CD4-positive, alpha-beta T cell (primary cell): ENCODE measurements at regions of chr18 and their contacts with region 1.

Region 1: GRCh38 chr18:6781786-6782185 is 52.3 kb downstream of the ARHGAP28 start:
- DNase-seq: no peak
- ATAC-seq: no peak
- H3K4me3 ChIP-seq: no peak overlapping the region
- H3K4me3 Mint-ChIP-seq: no peak overlapping the region
- H3K27ac ChIP-seq: no peak overlapping the region
- H3K27ac Mint-ChIP-seq: no peak overlapping the region
- H3K4me1 ChIP-seq: no peaks in the 10 kb centered on the region
- H3K4me1 Mint-ChIP-seq: no peaks in the 10 kb centered on the region
- H3K27me3 ChIP-seq: no peaks in the 10 kb centered on the region
- H3K27me3 Mint-ChIP-seq: no peaks in the 10 kb centered on the region
- CTCF ChIP-seq: no peak

Region 2: GRCh38 chr18:6741232-6741663 is 40.5 kb before region 1 on chr18:
- CTCF ChIA-PET with region 1: no interaction called
- POLR2A ChIA-PET with region 1: no interaction called
- intact Hi-C with region 1: no loop called
- DNase-seq: no peak
- ATAC-seq: no peak
- H3K4me3 ChIP-seq: no peak overlapping the region
- H3K4me3 Mint-ChIP-seq: no peak overlapping the region
- H3K27ac ChIP-seq: no peak overlapping the region
- H3K27ac Mint-ChIP-seq: no peak overlapping the region
- H3K4me1 ChIP-seq: no peaks in the 10 kb centered on the region
- H3K4me1 Mint-ChIP-seq: no peaks in the 10 kb centered on the region
- H3K27me3 ChIP-seq: no peaks in the 10 kb centered on the region
- H3K27me3 Mint-ChIP-seq: no peaks in the 10 kb centered on the region
- CTCF ChIP-seq: no peak

Region 3: DNA sequence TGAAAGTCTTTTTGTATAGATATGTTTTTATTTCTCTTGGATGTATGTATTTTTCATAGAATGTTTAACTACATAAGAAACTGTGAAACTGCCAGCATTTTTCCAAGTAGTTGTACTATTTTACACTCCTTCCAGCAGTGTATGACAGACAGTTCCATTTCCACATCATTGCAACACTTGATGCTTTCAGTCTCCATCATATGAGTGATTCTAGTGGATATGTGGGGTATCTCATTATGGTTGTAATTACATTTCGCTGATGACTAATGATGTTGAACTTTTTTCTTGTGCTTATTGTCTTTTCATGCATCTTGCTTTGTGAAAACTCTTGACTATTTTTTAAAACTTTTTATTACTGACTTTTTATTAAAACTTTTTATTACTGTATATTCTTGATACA is 49.1 kb after region 1 on chr18:
- CTCF ChIA-PET with region 1: no interaction called
- POLR2A ChIA-PET with region 1: no interaction called
- intact Hi-C with region 1: no loop called
- DNase-seq: no peak
- ATAC-seq: no peak
- H3K4me3 ChIP-seq: no peak overlapping the region
- H3K4me3 Mint-ChIP-seq: no peak overlapping the region
- H3K27ac ChIP-seq: no peak overlapping the region
- H3K27ac Mint-ChIP-seq: no peak overlapping the region
- H3K4me1 ChIP-seq: no peaks in the 10 kb centered on the region
- H3K4me1 Mint-ChIP-seq: no peaks in the 10 kb centered on the region
- H3K27me3 ChIP-seq: no peaks in the 10 kb centered on the region
- H3K27me3 Mint-ChIP-seq: no peaks in the 10 kb centered on the region
- CTCF ChIP-seq: no peak

Region 4: DNA sequence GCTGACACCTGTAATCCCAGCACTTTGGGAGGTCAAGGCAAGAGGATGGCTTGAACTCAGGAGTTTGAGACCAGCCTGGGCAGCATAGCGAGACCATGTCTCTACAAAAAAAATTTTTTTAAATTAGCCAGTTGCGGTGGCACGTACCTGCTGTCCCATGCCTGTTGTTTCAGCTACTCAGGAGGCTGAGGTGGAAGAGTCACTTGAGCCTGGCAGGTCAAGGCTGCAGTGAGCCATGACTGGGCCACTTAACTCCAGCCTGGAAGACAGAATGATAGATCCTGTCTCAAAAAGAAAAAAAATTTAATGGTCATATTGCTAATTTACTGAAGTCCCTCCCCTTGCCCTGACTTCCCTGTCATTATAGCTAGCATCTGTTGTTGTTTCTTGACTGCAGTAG is 60.3 kb after region 1 on chr18:
- CTCF ChIA-PET with region 1: no interaction called
- POLR2A ChIA-PET with region 1: no interaction called
- intact Hi-C with region 1: loop called in 1 of 2 experiments (anchors 10 kb)
- DNase-seq: no peak
- ATAC-seq: no peak
- H3K4me3 ChIP-seq: no peak overlapping the region
- H3K4me3 Mint-ChIP-seq: no peak overlapping the region
- H3K27ac ChIP-seq: no peak overlapping the region
- H3K27ac Mint-ChIP-seq: no peak overlapping the region
- H3K4me1 ChIP-seq: no peaks in the 10 kb centered on the region
- H3K4me1 Mint-ChIP-seq: no peaks in the 10 kb centered on the region
- H3K27me3 ChIP-seq: no peaks in the 10 kb centered on the region
- H3K27me3 Mint-ChIP-seq: no peaks in the 10 kb centered on the region
- CTCF ChIP-seq: no peak